ENCODE measurements at regions of chr12 and their contacts with region 1.

Region 1: DNA sequence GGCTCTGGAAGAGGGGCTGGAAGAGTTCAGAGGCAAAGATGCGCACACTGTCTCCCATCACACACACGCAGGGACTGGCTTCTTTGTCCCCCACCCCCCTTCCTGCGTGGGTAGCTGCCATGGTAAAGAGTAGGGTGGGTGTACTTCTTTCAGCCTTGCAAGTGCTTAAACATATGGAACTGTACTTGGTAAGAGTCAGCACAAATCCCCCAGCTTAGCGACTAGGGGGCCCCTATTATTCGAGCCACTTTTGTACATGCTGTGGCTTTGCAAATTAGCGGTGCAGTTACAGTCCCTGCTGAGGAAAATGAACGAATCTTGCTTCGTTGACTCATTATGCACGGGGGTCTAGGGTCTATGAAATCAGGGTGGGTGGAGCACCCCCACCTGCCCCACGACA is 123.8 kb downstream of the AACS start:
- DNase-seq: no peak
- ATAC-seq: no peak
- H3K4me3 ChIP-seq: no peak overlapping the region
- H3K27ac ChIP-seq: no peak overlapping the region
- H3K4me1 ChIP-seq: no peaks in the 10 kb centered on the region
- H3K27me3 ChIP-seq: peaks cover 81% of the 10 kb centered on the region
- CTCF ChIP-seq: no peak

Region 2: GRCh38 chr12:125159683-125160082 is 29.3 kb before region 1 on chr12:
- CTCF ChIA-PET with region 1: no interaction called
- POLR2A ChIA-PET with region 1: no interaction called
- intact Hi-C with region 1: no loop called
- DNase-seq: no peak
- ATAC-seq: no peak
- H3K4me3 ChIP-seq: no peak overlapping the region
- H3K27ac ChIP-seq: no peak overlapping the region
- H3K4me1 ChIP-seq: no peaks in the 10 kb centered on the region
- H3K27me3 ChIP-seq: no peaks in the 10 kb centered on the region
- CTCF ChIP-seq: no peak

Region 3: DNA sequence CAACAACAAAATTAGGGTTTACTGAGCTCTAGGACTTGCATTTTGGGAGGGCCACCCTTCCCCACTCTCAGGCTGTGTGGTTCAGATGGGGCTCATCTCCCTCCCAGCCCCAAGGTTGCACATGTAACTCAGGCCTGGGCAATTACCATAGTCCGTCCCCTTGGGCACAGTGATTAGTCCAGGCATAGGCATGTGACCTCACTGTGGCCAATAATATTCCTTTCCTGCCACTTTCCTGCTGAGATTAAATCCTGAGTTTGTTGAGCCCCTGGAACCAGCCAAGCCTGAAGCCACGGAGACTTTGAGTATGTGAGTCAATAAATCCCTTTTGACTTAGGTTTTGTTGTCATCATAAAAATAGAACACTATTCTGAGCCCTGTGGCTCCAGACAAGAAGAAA is 10.8 kb before region 1 on chr12:
- CTCF ChIA-PET with region 1: no interaction called
- POLR2A ChIA-PET with region 1: no interaction called
- intact Hi-C with region 1: no loop called
- DNase-seq: no peak
- ATAC-seq: no peak
- H3K4me3 ChIP-seq: no peak overlapping the region
- H3K27ac ChIP-seq: no peak overlapping the region
- H3K4me1 ChIP-seq: no peaks in the 10 kb centered on the region
- H3K27me3 ChIP-seq: peaks cover 79% of the 10 kb centered on the region
- CTCF ChIP-seq: no peak

Region 4: DNA sequence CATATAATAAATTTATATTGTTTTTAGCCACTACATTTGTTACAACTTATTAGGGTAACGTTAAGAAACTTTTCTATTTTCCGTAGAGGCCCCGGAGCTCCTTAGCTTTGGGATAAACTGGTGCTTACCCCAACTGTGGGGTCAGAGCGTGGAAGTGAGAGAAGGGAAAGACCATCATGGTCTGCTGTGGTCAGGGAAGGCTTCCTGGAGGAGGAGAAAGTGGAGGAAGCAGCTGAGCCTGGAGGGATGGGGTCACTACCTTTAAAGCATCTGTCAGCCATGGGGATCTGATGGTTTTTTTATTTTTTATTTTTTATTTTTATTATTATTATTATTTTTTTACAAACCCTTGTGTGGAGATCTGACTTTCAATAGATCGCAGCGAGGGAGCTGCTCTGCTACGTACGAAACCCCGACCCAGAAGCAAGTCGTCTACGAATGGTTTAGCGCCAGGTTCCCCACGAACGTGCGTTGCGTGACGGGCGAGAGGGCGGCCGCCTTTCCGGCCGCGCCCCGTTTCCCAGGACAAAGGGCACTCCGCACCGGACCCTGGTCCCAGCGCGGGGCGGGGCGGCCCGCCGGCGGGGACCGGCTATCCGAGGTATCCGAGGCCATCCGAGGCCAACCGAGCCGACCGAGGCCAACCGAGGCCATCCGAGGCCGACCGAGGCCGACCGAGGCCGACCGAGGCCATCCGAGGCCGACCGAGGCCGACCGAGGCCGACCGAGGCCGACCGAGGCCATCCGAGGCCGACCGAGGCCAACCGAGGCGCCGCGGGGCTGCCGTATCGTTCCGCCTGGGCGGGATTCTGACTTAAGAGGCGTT is 1976.8 kb after region 1 on chr12:
- CTCF ChIA-PET with region 1: interaction called, 15 read pairs
- POLR2A ChIA-PET with region 1: no interaction called
- intact Hi-C with region 1: no loop called
- DNase-seq: peak; percentile 82
- ATAC-seq: peak; percentile 91
- H3K4me3 ChIP-seq: peak overlapping the region; percentile 48; the same call in 1 of the 2 replicates
- H3K27ac ChIP-seq: peak overlapping the region; percentile 38
- H3K4me1 ChIP-seq: peaks cover 21% of the 10 kb centered on the region
- H3K27me3 ChIP-seq: no peaks in the 10 kb centered on the region
- CTCF ChIP-seq: no peak